ENCODE measurements at regions of chr10 and their contacts with region 1.

Region 1: GRCh38 chr10:112115799-112116385 is 67.7 kb downstream of the GPAM start:
- H3K4me3 ChIP-seq: no peak overlapping the region
- H3K27ac ChIP-seq: no peak overlapping the region
- H3K4me1 ChIP-seq: no peaks in the 10 kb centered on the region
- CTCF ChIP-seq: peak; percentile 57

Region 2: DNA sequence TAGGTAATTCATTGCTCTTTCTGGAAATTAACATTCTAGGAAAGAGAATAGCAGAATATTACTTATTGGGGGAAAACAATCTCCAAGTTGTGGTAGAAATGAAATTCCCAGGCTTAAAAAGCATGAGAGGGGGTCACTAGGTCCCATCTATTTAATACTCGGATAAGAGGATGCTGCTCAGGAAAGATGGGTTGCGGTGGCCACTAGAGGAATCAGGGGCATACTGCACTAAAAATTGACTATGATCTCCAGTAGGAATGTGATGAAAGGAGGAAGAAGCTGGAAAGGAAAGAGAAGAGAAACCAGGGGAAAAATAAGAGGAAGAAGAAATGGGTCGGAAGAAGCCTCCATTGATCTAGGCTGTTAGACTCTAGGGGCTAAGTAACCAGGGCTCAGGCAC is 125.2 kb before region 1 on chr10:
- CTCF ChIA-PET with region 1: no interaction called
- POLR2A ChIA-PET with region 1: no interaction called
- H3K4me3 ChIP-seq: no peak overlapping the region
- H3K27ac ChIP-seq: no peak overlapping the region
- H3K4me1 ChIP-seq: no peaks in the 10 kb centered on the region
- CTCF ChIP-seq: no peak

Region 3: DNA sequence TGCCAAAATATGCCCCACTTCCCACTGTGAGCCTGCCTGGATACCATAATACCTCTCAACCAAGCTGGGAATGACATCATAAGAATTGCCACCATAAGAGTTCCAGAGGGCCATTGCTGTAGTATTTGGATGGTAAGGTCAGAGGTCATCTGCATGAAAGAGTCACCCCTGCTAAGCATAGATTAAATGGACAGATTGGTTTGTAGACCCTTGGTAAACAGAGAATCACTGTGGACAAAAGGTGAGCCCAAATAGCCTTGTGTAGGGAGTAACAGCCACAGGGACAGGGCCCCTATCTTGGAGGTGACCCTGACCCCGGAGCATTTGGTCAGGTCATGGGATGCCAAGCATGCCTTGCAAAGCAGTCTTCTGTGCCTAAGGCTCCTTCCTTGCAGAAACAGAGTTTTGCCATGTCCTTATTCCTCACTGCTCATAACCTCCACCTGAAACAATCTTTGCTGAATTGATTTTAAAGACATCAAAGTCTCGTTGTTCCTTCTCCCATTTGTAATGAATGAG is 61.9 kb before region 1 on chr10:
- CTCF ChIA-PET with region 1: no interaction called
- POLR2A ChIA-PET with region 1: no interaction called
- H3K4me3 ChIP-seq: no peak overlapping the region
- H3K27ac ChIP-seq: no peak overlapping the region
- H3K4me1 ChIP-seq: no peaks in the 10 kb centered on the region
- CTCF ChIP-seq: no peak

Region 4: GRCh38 chr10:112087953-112088456 is 27.9 kb before region 1 on chr10:
- CTCF ChIA-PET with region 1: no interaction called
- POLR2A ChIA-PET with region 1: no interaction called
- H3K4me3 ChIP-seq: no peak overlapping the region
- H3K27ac ChIP-seq: no peak overlapping the region
- H3K4me1 ChIP-seq: peaks cover 5% of the 10 kb centered on the region; the same call in 1 of the 2 replicates
- CTCF ChIP-seq: no peak

Region 5: GRCh38 chr10:112314822-112315474 is 199.1 kb after region 1 on chr10:
- CTCF ChIA-PET with region 1: interaction called, 15 read pairs
- POLR2A ChIA-PET with region 1: no interaction called
- H3K4me3 ChIP-seq: no peak overlapping the region
- H3K27ac ChIP-seq: no peak overlapping the region
- H3K4me1 ChIP-seq: no peaks in the 10 kb centered on the region
- CTCF ChIP-seq: peak; percentile 71; the same call in 1 of the 2 replicates